ENCODE measurements at regions of chr1 and their contacts with region 1.

Region 1: GRCh38 chr1:201085916-201086735 is 26.1 kb downstream of the CACNA1S start:
- DNase-seq: peak; percentile 6 to 59 (median 35)
- ATAC-seq: peak; percentile 46
- H3K4me3 ChIP-seq: no peak overlapping the region
- H3K4me3 Mint-ChIP-seq: no peak overlapping the region
- H3K27ac ChIP-seq: no peak overlapping the region
- H3K27ac Mint-ChIP-seq: no peak overlapping the region
- H3K4me1 ChIP-seq: no peaks in the 10 kb centered on the region
- H3K4me1 Mint-ChIP-seq: no peaks in the 10 kb centered on the region
- H3K27me3 ChIP-seq: peaks cover 0 to 4% of the 10 kb centered on the region in 2 experiments
- H3K27me3 Mint-ChIP-seq: peaks cover 4% of the 10 kb centered on the region
- CTCF ChIP-seq: no peak

Region 2: GRCh38 chr1:201114236-201115131 is 28.4 kb after region 1 on chr1:
- CTCF ChIA-PET with region 1: interaction called, 11 read pairs
- POLR2A ChIA-PET with region 1: interaction called, 3 read pairs
- intact Hi-C with region 1: loop called (anchors 1 kb)
- DNase-seq: peak; percentile 47 to 85 (median 71)
- ATAC-seq: peak; percentile 80
- H3K4me3 ChIP-seq: peak overlapping the region; percentile 67 to 87
- H3K4me3 Mint-ChIP-seq: peak overlapping the region; percentile 91
- H3K27ac ChIP-seq: peak overlapping the region; percentile 40 to 51
- H3K27ac Mint-ChIP-seq: peak overlapping the region; percentile 90
- H3K4me1 ChIP-seq: peaks cover 13% of the 10 kb centered on the region
- H3K4me1 Mint-ChIP-seq: peaks cover 29% of the 10 kb centered on the region
- H3K27me3 ChIP-seq: no peaks in the 10 kb centered on the region
- H3K27me3 Mint-ChIP-seq: no peaks in the 10 kb centered on the region
- CTCF ChIP-seq: peak; percentile 72

Region 3: DNA sequence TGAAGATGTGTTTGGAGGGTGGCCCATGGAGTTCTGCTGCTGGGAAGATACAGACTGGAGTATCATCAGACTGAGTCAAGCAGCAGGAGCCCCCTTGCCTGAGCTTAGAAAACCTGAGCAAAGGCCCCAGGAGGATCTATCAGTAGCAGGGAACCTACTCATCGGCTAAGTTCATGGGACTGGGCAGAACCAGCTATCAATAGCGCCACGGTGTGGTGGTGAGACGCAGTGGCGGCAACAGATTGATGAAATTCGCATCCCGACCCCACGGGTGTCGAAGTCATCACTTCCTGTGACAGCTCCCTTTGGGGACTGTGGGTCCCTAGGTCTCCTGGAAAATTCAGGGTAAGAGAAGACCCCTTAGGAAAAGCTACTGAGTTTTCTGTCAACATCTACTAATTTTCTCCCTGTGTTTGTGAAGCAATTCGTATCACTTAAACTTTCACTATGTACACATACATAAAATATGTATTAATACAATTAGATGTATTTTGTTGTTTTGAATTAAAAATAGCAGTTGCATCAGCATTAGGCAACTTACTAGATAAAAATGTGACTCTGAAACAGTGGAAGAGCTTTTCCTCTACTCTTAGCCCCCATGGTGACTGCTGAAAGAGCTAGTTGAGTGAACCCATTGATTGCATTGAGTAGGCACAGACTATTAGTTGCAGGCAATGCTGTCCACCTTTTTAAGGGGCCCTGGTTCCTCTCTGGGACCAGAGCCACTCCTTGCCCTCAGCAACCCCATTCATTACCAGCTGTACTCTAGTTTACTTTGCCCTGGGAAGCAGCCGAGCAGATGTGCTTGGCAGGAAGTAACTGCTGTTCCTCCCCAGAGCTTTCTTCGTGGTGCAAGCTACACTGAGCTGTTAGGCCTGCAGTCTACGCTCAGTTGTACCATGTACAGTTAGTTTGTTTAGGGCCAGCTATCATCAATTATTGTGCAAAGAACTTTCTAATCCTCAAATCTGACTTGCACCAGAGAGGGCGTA is 33.4 kb after region 1 on chr1:
- CTCF ChIA-PET with region 1: interaction called, 11 read pairs
- POLR2A ChIA-PET with region 1: interaction called, 3 read pairs
- intact Hi-C with region 1: loop called (anchors 1 kb)
- DNase-seq: peak; percentile 17 to 73 (median 54)
- ATAC-seq: peak; percentile 44
- H3K4me3 ChIP-seq: no peak overlapping the region
- H3K4me3 Mint-ChIP-seq: no peak overlapping the region
- H3K27ac ChIP-seq: no peak overlapping the region
- H3K27ac Mint-ChIP-seq: no peak overlapping the region
- H3K4me1 ChIP-seq: peaks cover 13% of the 10 kb centered on the region
- H3K4me1 Mint-ChIP-seq: peaks cover 25% of the 10 kb centered on the region
- H3K27me3 ChIP-seq: no peaks in the 10 kb centered on the region
- H3K27me3 Mint-ChIP-seq: peaks cover 8% of the 10 kb centered on the region
- CTCF ChIP-seq: peak; percentile 64

Region 4: DNA sequence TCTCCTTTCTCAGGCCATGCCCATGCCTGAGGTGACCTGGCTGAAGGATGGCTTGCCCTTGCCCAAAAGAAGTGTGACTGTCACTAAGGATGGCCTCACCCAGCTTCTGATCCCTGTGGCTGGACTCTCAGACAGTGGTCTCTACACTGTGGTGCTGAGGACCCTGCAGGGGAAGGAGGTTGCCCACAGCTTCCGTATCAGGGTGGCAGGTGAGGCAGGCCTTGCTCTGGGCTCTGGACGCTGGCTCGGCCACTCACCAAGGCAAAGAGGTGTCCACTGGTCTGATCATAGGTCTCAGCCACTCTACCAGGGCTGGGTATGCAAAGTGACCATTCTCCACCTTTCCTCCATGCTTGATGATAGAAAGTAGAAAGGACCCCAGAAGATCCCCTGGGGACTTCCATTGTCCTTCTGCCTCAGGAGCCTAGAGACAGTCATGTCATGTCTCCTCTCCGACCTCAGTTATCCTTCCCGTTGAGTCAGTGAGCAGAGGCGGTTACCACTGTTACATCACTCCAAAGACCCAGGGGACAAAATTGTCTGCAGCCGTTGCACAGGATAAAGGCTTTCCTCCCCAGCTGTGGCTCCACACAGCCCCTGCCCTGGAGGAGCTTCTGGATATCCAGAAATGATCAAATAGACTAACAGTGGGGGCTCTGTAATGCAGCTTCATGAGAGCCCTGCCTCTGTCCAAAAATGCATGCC is 138.7 kb after region 1 on chr1:
- CTCF ChIA-PET with region 1: interaction called, 7 read pairs
- POLR2A ChIA-PET with region 1: no interaction called
- intact Hi-C with region 1: loop called (anchors 2 to 5 kb)
- DNase-seq: peak in 1 of 9 experiments; percentile 29
- ATAC-seq: no peak
- H3K4me3 ChIP-seq: no peak overlapping the region
- H3K4me3 Mint-ChIP-seq: no peak overlapping the region
- H3K27ac ChIP-seq: no peak overlapping the region
- H3K27ac Mint-ChIP-seq: no peak overlapping the region
- H3K4me1 ChIP-seq: no peaks in the 10 kb centered on the region
- H3K4me1 Mint-ChIP-seq: no peaks in the 10 kb centered on the region
- H3K27me3 ChIP-seq: no peaks in the 10 kb centered on the region
- H3K27me3 Mint-ChIP-seq: peaks cover 7% of the 10 kb centered on the region
- CTCF ChIP-seq: no peak